Breast epithelium (tissue), 4 donors: ENCODE measurements at regions of chr18 and their contacts with region 1.

Region 1: DNA sequence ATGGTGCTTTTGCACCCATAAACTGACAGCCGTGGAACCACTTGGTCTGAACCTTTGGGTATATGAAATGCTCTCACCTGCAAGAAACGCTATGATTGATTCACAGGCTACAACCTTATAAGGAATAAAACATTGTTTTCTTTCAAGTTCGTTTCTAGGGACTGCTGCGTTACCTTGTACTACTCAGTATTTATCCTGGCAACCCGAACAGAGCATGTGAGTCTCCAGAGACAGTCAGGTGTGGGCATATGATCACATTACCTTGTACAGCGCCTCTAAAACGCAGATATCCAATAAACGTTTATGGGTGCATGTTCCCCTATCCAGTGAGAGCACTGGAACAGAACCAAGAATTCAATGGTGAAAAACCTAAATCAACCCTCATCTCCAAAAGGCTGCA is 1.7 kb downstream of the CCBE1 start:
- DNase-seq: no peak
- H3K4me3 ChIP-seq: peak overlapping the region in 1 of 3 donors; percentile 64
- H3K27ac ChIP-seq: no peak overlapping the region
- H3K4me1 ChIP-seq: peaks cover 0 to 11% of the 10 kb centered on the region in 2 donors
- H3K27me3 ChIP-seq: peaks cover 0 to 27% of the 10 kb centered on the region in 2 donors
- CTCF ChIP-seq: no peak
- POLR2A ChIP-seq: no peak

Region 2: GRCh38 chr18:59707306-59707705 is 11.8 kb after region 1 on chr18:
- intact Hi-C with region 1: no loop called
- DNase-seq: no peak
- H3K4me3 ChIP-seq: no peak overlapping the region
- H3K27ac ChIP-seq: no peak overlapping the region
- H3K4me1 ChIP-seq: no peaks in the 10 kb centered on the region
- H3K27me3 ChIP-seq: no peaks in the 10 kb centered on the region
- CTCF ChIP-seq: no peak
- POLR2A ChIP-seq: no peak

Region 3: DNA sequence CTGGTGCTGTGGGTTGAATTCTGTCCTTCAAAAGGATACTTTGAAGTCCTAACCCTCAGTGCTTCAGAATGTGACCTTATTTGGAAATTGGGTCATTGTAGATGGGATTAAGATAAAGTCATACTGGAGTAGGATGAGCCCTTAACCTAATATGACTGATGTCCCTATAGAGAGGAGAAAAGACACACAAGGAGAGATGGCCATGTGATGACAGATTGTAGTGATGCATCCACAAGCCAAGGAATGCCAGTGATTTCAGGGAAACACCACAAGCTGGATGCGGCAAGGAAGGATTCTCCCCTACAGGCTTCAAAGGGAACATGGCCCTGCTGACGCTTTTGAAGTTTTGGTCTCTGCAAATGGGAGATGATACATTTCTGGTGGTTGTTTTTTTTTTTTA is 26.4 kb after region 1 on chr18:
- intact Hi-C with region 1: loop called (anchors 1 kb)
- DNase-seq: no peak
- H3K4me3 ChIP-seq: no peak overlapping the region
- H3K27ac ChIP-seq: no peak overlapping the region
- H3K4me1 ChIP-seq: no peaks in the 10 kb centered on the region
- H3K27me3 ChIP-seq: no peaks in the 10 kb centered on the region
- CTCF ChIP-seq: no peak
- POLR2A ChIP-seq: no peak

Region 4: DNA sequence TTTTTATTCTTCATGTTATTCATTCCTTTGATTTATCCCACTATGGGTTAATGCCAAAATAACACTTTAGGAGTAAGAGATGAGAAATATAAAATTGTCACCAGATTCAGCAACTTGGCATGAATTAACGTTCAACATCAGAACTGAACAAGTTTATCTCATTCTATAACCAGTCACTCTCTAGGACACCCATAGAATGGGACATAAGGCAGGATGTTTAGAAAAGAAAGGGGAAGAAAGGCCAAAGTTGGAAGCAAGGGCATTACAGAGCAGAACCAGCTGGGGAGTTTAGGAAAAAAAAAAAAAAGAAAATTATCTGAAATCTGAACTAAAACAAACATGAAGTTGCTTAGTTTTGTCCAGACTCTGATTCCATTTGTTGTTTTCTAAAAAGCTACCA is 415.3 kb after region 1 on chr18:
- intact Hi-C with region 1: no loop called
- DNase-seq: no peak
- H3K4me3 ChIP-seq: no peak overlapping the region
- H3K27ac ChIP-seq: no peak overlapping the region
- H3K4me1 ChIP-seq: no peaks in the 10 kb centered on the region
- H3K27me3 ChIP-seq: no peaks in the 10 kb centered on the region
- CTCF ChIP-seq: no peak
- POLR2A ChIP-seq: no peak